Activated CD4-positive, alpha-beta memory T cell treated with anti-CD3 and anti-CD28 coated beads for 36 hours (primary cell): ENCODE measurements at regions of chr6 and their contacts with region 1.

Region 1: DNA sequence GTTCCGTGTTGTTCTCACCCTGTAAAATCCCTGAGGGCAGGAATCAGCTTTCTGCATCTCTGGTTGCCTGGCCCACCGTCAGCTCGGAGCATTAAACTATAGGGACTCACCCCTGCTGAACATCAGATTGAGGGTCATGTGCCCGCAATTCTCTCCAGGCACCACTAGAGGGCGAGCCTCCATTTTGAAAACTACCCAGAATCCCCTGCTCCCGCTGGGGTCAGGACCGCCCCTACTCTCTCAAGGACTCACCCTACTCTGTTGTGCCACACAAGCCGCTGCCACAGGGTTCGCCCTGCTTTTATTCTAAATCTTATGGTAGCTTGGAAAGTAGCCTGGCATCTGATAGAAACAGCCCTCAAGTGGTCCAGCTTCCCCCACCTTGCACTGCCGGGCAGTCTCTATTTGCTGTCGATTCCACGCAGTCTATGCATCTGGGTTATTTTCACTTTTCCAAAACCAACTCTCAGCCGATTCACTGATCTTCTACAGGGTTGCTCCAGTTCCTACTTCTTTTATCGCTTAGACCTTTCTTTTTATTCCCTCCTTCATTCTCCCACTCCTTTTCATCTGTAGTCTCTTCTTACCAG is 244.1 kb upstream of the QKI start:
- DNase-seq: peak; percentile 38
- H3K4me3 Mint-ChIP-seq: no peak overlapping the region
- H3K27ac Mint-ChIP-seq: no peak overlapping the region
- H3K4me1 Mint-ChIP-seq: peaks cover 2% of the 10 kb centered on the region
- H3K27me3 Mint-ChIP-seq: peaks cover 6% of the 10 kb centered on the region

Region 2: GRCh38 chr6:163180874-163181541 is 10.6 kb after region 1 on chr6:
- CTCF ChIA-PET with region 1: interaction called, 17 read pairs
- POLR2A ChIA-PET with region 1: no interaction called
- intact Hi-C with region 1: no loop called
- DNase-seq: peak; percentile 17
- H3K4me3 Mint-ChIP-seq: no peak overlapping the region
- H3K27ac Mint-ChIP-seq: no peak overlapping the region
- H3K4me1 Mint-ChIP-seq: no peaks in the 10 kb centered on the region
- H3K27me3 Mint-ChIP-seq: peaks cover 7% of the 10 kb centered on the region

Region 3: GRCh38 chr6:163554663-163555062 is 384.3 kb after region 1 on chr6:
- CTCF ChIA-PET with region 1: interaction called, 10 read pairs
- POLR2A ChIA-PET with region 1: no interaction called
- intact Hi-C with region 1: loop called (anchors 2 kb)
- DNase-seq: peak; percentile 77
- H3K4me3 Mint-ChIP-seq: no peak overlapping the region
- H3K27ac Mint-ChIP-seq: no peak overlapping the region
- H3K4me1 Mint-ChIP-seq: peaks cover 7% of the 10 kb centered on the region
- H3K27me3 Mint-ChIP-seq: no peaks in the 10 kb centered on the region

Region 4: DNA sequence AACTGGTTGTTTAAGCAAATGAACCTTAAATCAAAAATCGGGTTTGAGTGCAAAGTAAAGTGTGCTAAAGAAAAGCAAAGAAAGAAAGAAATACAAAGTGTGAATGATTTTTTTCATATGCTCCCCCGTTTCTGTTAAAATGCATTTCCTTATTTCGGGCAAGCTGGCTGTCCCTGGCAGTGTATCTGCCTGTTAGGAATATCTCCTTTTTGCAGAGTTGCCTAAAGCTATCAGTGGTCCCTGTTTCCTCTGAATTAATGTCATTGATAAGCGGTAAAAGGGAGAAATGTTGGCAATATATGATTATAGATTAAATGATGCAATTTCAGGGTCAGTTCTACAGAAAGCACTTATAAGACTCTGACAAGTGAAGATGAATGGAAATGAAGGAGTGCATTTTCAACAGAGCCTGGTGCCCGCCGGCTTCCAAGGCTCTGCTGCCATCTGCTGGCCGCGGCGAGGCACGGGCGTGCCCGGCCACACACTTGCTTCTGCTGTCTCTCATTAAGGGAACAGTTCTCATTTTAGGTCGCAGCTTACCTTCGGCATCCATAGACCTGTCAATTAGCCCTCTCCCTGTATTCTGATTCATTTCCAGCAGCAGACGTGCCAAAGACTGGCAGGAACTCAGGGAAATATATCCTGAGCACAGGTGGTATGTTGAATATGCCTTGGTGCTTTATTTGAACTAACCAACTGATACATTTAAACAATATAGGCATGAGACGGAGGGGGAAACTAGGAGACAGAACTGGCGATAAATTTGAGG is 1757.1 kb after region 1 on chr6:
- CTCF ChIA-PET with region 1: no interaction called
- POLR2A ChIA-PET with region 1: no interaction called
- intact Hi-C with region 1: loop called (anchors 5 kb)
- DNase-seq: peak; percentile 67
- H3K4me3 Mint-ChIP-seq: no peak overlapping the region
- H3K27ac Mint-ChIP-seq: no peak overlapping the region
- H3K4me1 Mint-ChIP-seq: no peaks in the 10 kb centered on the region
- H3K27me3 Mint-ChIP-seq: no peaks in the 10 kb centered on the region